A673 (cell line): ENCODE measurements at regions of chr11 and their contacts with region 1.

Region 1: GRCh38 chr11:47731475-47731874 is 16.3 kb upstream of the AGBL2 start:
- DNase-seq: no peak
- H3K4me3 ChIP-seq: no peak overlapping the region
- H3K27ac ChIP-seq: peak overlapping the region; percentile 0
- H3K4me1 ChIP-seq: no peaks in the 10 kb centered on the region
- H3K27me3 ChIP-seq: no peaks in the 10 kb centered on the region
- CTCF ChIP-seq: no peak

Region 2: DNA sequence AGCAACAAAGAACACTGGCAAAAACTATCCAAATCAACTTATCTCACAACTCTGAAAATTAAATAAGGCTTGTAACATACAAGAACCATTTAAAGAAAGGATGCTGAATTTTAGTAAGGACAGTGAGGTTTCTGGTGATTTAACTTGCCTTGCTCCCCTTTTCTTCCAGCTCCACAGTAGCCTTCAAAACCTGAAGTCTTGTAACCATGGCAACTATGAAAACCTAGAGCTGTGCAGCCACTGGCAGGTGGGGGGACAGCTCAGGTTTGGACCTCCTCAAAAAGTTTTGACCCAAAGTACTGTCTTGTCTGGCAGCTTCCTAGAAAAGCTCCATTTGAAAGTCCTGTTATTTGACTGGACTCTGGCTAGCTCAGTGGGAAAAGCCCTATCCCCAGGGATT is 945.4 kb before region 1 on chr11:
- CTCF ChIA-PET with region 1: no interaction called
- POLR2A ChIA-PET with region 1: no interaction called
- intact Hi-C with region 1: loop called (anchors 10 kb)
- DNase-seq: no peak
- H3K4me3 ChIP-seq: no peak overlapping the region
- H3K27ac ChIP-seq: no peak overlapping the region
- H3K4me1 ChIP-seq: no peaks in the 10 kb centered on the region
- H3K27me3 ChIP-seq: no peaks in the 10 kb centered on the region
- CTCF ChIP-seq: no peak

Region 3: DNA sequence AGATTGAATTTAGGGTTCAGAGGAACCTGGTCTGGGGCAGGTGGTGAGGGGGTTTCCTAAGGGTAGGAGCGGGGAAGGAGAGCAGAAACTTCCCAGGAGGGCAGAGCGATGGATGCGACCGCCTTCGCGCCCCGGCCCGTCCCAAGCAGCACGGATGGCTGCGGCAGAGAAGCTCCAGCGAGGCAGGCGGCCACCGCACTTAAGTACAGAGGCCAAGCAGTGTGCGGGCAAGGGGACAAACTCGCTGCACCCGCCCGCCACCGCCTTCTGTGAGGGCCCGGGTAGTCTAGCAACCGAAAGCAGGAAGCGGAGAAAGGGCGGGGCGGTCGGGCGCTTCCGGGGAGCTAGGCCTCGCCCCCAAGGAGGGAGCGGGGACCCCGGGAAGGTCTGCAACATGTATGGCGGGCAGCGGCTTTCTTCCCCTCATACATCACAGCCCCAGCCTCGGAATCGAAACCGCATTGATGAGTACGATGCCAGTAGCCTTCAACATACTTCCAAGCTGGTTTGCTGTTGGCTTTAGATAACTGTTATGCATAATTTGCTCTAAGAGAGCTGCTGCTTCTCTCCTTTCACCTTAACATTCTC is 16.3 kb before region 1 on chr11 and contains the start of gene AGBL2:
- CTCF ChIA-PET with region 1: no interaction called
- POLR2A ChIA-PET with region 1: no interaction called
- intact Hi-C with region 1: loop called (anchors 2 kb)
- DNase-seq: peak; percentile 94
- H3K4me3 ChIP-seq: peak within 1 kb of the TSS; percentile 61
- H3K27ac ChIP-seq: peak within 1 kb of the TSS; percentile 63
- H3K4me1 ChIP-seq: peaks cover 12% of the 10 kb centered on the region
- H3K27me3 ChIP-seq: no peaks in the 10 kb centered on the region
- CTCF ChIP-seq: no peak
- total RNA-seq, gene AGBL2: 6.5 and 8.2 TPM in 2 replicates

Region 4: DNA sequence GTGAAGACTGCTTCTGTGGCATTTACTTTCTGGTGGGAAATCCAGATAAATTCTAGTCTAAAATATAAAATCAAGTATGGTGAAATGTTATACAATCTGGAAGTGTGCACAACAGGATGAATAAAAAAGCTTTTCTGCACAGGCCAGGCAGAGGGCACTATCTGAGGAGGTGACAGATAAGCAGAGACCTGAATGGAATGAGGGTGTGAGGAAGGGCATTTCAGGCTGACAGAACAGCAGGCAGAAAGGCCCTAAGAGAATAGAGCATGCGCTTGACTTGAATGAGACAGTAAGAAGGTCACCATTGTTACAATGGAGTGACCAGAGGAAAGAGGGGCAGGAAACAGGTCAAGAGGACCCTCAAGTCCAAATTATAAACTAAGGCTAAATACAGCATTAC is 69.3 kb after region 1 on chr11:
- CTCF ChIA-PET with region 1: no interaction called
- POLR2A ChIA-PET with region 1: no interaction called
- intact Hi-C with region 1: loop called (anchors 5 kb)
- DNase-seq: no peak
- H3K4me3 ChIP-seq: no peak overlapping the region
- H3K27ac ChIP-seq: no peak overlapping the region
- H3K4me1 ChIP-seq: no peaks in the 10 kb centered on the region
- H3K27me3 ChIP-seq: no peaks in the 10 kb centered on the region
- CTCF ChIP-seq: no peak